ENCODE measurements at regions of chr6 and their contacts with region 1.

Region 1: DNA sequence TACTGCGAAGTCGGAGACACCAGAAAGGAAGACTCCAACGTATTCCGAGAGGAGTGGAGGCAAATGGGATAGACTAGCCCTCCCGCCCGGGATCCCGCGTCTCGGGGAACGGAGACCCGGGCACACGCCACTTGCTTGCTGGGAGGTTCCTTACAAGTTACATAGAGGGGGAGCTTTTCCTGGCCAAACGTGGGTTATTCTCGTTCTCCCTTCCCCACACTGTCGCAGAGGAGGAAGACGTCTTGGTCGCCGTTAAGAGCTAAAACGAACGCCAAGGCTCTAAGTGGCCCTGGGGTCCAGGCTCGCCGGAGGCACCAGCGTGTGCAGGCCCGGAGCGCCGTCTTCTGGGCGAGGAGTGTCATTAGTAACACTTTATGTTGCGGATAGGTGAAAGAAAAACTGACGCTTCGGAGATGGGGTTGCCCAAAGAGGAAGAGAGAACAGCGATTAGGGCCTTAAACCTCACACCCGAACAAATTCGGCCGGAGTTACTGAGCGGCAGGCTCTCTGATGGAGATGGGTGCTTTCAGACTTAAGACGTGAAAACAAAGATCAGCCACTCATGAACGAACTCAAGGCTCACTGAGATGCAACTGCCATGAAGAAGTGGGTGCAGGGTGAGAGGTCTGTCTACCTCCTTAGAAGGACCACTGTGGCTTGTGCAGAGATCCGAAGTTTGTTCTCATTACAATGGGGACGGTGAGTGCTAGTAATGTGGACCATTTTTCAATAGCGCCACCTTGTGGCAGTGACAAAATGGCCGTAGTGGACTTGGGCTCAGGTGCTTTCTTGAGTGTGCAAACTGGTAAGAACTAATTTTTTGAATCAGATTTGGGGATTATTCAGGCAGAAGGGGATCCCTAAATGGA is 11.7 kb upstream of the ZNF311 start:
- DNase-seq: peak; percentile 90
- ATAC-seq: peak; percentile 84
- H3K4me3 ChIP-seq: peak overlapping the region; percentile 37 to 67 (median 57)
- H3K4me3 Mint-ChIP-seq: peak overlapping the region; percentile 85
- H3K27ac ChIP-seq: no peak overlapping the region
- H3K27ac Mint-ChIP-seq: peak overlapping the region; percentile 47
- H3K4me1 ChIP-seq: peaks cover 11 to 16% of the 10 kb centered on the region in 2 donors
- H3K4me1 Mint-ChIP-seq: peaks cover 19% of the 10 kb centered on the region
- H3K27me3 ChIP-seq: peaks cover 0 to 48% (median 32%) of the 10 kb centered on the region in 4 experiments
- H3K27me3 Mint-ChIP-seq: peaks cover 47% of the 10 kb centered on the region
- CTCF ChIP-seq: peak; percentile 91

Region 2: DNA sequence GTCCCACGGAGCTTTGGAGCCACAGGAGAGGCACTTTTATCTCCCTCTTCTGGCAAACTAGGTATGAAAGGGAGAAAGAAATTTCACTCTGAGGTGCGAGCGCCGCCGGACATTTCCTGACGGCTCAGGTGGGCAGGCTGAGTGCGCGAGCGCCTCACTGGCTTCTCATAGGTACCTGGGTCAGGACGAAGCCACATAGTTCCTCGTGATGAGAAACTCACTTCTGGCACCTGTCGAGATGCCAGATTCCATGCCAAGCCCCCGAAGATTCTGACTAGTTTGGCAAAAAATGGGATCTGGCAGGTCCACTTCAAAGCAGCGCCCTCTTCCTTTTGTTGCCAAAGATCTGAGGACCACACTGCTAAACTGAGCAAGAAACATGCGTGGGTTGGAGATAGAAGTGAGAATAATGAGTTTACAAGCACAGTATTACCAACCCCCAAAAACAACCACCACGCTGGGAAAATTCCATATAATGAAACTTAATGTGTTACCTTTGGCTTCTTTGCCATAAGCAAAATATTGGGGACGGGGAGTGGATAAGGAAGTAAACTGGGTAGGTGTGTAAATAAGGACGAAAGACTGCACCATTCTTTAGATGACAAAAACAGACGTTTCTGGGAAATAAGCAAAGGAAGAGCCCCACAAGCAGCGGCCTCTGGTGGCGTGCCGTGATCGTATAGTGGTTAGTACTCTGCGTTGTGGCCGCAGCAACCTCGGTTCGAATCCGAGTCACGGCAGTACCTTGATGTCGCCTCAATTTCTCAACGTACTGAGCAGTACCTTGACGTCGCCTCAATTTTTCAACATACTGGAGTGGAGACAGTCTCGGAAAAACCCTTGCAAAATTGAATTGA is 1859.1 kb before region 1 on chr6:
- CTCF ChIA-PET with region 1: no interaction called
- POLR2A ChIA-PET with region 1: no interaction called
- intact Hi-C with region 1: loop called (anchors 2 kb)
- DNase-seq: peak; percentile 91
- ATAC-seq: peak; percentile 77
- H3K4me3 ChIP-seq: peak overlapping the region; percentile 59 to 91 (median 72)
- H3K4me3 Mint-ChIP-seq: peak overlapping the region; percentile 94
- H3K27ac ChIP-seq: peak overlapping the region; percentile 18 to 45
- H3K27ac Mint-ChIP-seq: peak overlapping the region; percentile 85
- H3K4me1 ChIP-seq: peaks cover 17 to 20% of the 10 kb centered on the region in 2 donors
- H3K4me1 Mint-ChIP-seq: peaks cover 25% of the 10 kb centered on the region
- H3K27me3 ChIP-seq: no peaks in the 10 kb centered on the region
- H3K27me3 Mint-ChIP-seq: no peaks in the 10 kb centered on the region
- CTCF ChIP-seq: peak; percentile 64

Region 3: GRCh38 chr6:28683944-28684538 is 332.8 kb before region 1 on chr6:
- CTCF ChIA-PET with region 1: interaction called, 12 read pairs
- POLR2A ChIA-PET with region 1: no interaction called
- intact Hi-C with region 1: loop called (anchors 1 kb)
- DNase-seq: peak; percentile 53
- ATAC-seq: peak; percentile 54
- H3K4me3 ChIP-seq: no peak overlapping the region
- H3K4me3 Mint-ChIP-seq: no peak overlapping the region
- H3K27ac ChIP-seq: no peak overlapping the region
- H3K27ac Mint-ChIP-seq: no peak overlapping the region
- H3K4me1 ChIP-seq: no peaks in the 10 kb centered on the region
- H3K4me1 Mint-ChIP-seq: no peaks in the 10 kb centered on the region
- H3K27me3 ChIP-seq: peaks cover 0 to 40% (median 31%) of the 10 kb centered on the region in 4 experiments
- H3K27me3 Mint-ChIP-seq: peaks cover 71% of the 10 kb centered on the region
- CTCF ChIP-seq: peak; percentile 76

Region 4: DNA sequence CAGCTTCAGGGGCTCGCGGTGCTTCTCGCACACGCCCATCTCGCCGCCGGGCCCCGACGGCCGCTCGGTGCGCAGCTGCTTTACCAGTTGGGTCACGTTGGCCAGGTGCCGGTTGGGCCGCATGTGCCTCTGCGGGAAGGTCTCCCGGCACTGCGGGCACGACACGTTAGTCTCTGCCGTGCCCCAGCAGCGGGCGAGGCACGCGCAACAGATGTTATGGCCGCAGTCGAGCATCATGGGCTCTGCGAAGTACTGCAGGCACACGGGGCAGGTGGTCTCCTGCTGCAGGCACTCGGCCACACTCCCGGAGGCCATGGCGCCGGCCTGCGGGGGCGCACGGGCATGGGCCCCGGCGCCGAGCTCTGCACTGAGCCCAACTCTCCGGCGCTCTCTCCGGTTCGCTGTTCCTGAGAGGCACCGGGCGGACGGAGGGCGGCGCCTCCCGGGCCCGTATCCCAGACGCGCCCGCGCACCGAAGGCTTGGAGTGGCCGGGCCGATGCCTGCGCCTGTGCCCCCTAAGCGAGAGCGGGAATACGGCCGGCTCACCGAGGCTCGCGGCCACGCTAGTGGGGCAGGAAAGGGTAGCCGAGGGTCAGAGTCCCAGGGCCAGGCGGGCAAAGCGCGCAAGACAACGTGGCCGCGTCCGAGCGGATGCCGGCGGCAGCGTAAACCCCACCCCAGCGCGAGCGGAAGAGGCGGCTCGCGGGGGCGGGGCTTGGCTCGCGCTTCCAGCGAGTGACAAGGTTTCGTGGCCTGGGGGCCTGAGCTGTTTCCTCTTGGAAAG is 93.3 kb before region 1 on chr6 and contains the start of gene TRIM27:
- CTCF ChIA-PET with region 1: no interaction called
- POLR2A ChIA-PET with region 1: no interaction called
- intact Hi-C with region 1: loop called (anchors 5 kb)
- DNase-seq: peak; percentile 90
- ATAC-seq: peak; percentile 86
- H3K4me3 ChIP-seq: peak within 1 kb of the TSS; percentile 71 to 97 (median 92)
- H3K4me3 Mint-ChIP-seq: peak within 1 kb of the TSS; percentile 90
- H3K27ac ChIP-seq: peak within 1 kb of the TSS; percentile 81 to 83
- H3K27ac Mint-ChIP-seq: peak within 1 kb of the TSS; percentile 97
- H3K4me1 ChIP-seq: peaks cover 30% of the 10 kb centered on the region in 2 donors
- H3K4me1 Mint-ChIP-seq: peaks cover 34% of the 10 kb centered on the region
- H3K27me3 ChIP-seq: no peaks in the 10 kb centered on the region
- H3K27me3 Mint-ChIP-seq: no peaks in the 10 kb centered on the region
- CTCF ChIP-seq: peak; percentile 21
- total RNA-seq, gene TRIM27: 66.7 and 70.0 TPM in 2 replicates

Region 5: GRCh38 chr6:29005183-29005885 is 11.5 kb before region 1 on chr6 and contains the start of gene ZNF311:
- CTCF ChIA-PET with region 1: interaction called, 10 read pairs
- POLR2A ChIA-PET with region 1: no interaction called
- intact Hi-C with region 1: no loop called
- DNase-seq: peak; percentile 32
- ATAC-seq: no peak
- H3K4me3 ChIP-seq: peak within 1 kb of the TSS in 4 of 5 experiments; percentile 1 to 56 (median 44)
- H3K4me3 Mint-ChIP-seq: peak within 1 kb of the TSS; percentile 80
- H3K27ac ChIP-seq: no peak within 1 kb of the TSS
- H3K27ac Mint-ChIP-seq: no peak within 1 kb of the TSS
- H3K4me1 ChIP-seq: peaks cover 5 to 10% of the 10 kb centered on the region in 2 donors
- H3K4me1 Mint-ChIP-seq: peaks cover 5% of the 10 kb centered on the region
- H3K27me3 ChIP-seq: peaks cover 0 to 34% (median 23%) of the 10 kb centered on the region in 4 experiments
- H3K27me3 Mint-ChIP-seq: peaks cover 53% of the 10 kb centered on the region
- CTCF ChIP-seq: no peak
- total RNA-seq, gene ZNF311: 0.10 and 0.17 TPM in 2 replicates

Region 6: GRCh38 chr6:29792123-29793035 is 775.6 kb after region 1 on chr6:
- CTCF ChIA-PET with region 1: no interaction called
- POLR2A ChIA-PET with region 1: no interaction called
- intact Hi-C with region 1: no loop called
- DNase-seq: peak; percentile 84
- ATAC-seq: peak; percentile 89
- H3K4me3 ChIP-seq: peak overlapping the region; percentile 30 to 89 (median 85)
- H3K4me3 Mint-ChIP-seq: peak overlapping the region; percentile 91
- H3K27ac ChIP-seq: peak overlapping the region; percentile 56 to 90
- H3K27ac Mint-ChIP-seq: peak overlapping the region; percentile 80
- H3K4me1 ChIP-seq: peaks cover 5 to 16% of the 10 kb centered on the region in 2 donors
- H3K4me1 Mint-ChIP-seq: peaks cover 19% of the 10 kb centered on the region
- H3K27me3 ChIP-seq: peaks cover 0 to 30% (median 19%) of the 10 kb centered on the region in 4 experiments
- H3K27me3 Mint-ChIP-seq: peaks cover 41% of the 10 kb centered on the region
- CTCF ChIP-seq: no peak

Region 7: GRCh38 chr6:29847871-29848630 is 831.3 kb after region 1 on chr6:
- CTCF ChIA-PET with region 1: no interaction called
- POLR2A ChIA-PET with region 1: no interaction called
- intact Hi-C with region 1: no loop called
- DNase-seq: peak; percentile 85
- ATAC-seq: peak; percentile 85
- H3K4me3 ChIP-seq: no peak overlapping the region
- H3K4me3 Mint-ChIP-seq: no peak overlapping the region
- H3K27ac ChIP-seq: no peak overlapping the region
- H3K27ac Mint-ChIP-seq: no peak overlapping the region
- H3K4me1 ChIP-seq: peaks cover 6 to 11% of the 10 kb centered on the region in 2 donors
- H3K4me1 Mint-ChIP-seq: peaks cover 9% of the 10 kb centered on the region
- H3K27me3 ChIP-seq: peaks cover 0 to 63% (median 45%) of the 10 kb centered on the region in 4 experiments
- H3K27me3 Mint-ChIP-seq: peaks cover 66% of the 10 kb centered on the region
- CTCF ChIP-seq: peak; percentile 92

Region 8: GRCh38 chr6:30463651-30464618 is 1447.1 kb after region 1 on chr6:
- CTCF ChIA-PET with region 1: no interaction called
- POLR2A ChIA-PET with region 1: no interaction called
- intact Hi-C with region 1: no loop called
- DNase-seq: peak; percentile 71
- ATAC-seq: peak; percentile 58
- H3K4me3 ChIP-seq: peak overlapping the region in 4 of 5 experiments; percentile 8 to 41 (median 30)
- H3K4me3 Mint-ChIP-seq: peak overlapping the region; percentile 65
- H3K27ac ChIP-seq: no peak overlapping the region
- H3K27ac Mint-ChIP-seq: no peak overlapping the region
- H3K4me1 ChIP-seq: peaks cover 42% of the 10 kb centered on the region in 2 donors
- H3K4me1 Mint-ChIP-seq: peaks cover 43% of the 10 kb centered on the region
- H3K27me3 ChIP-seq: peaks cover 0 to 90% (median 77%) of the 10 kb centered on the region in 4 experiments
- H3K27me3 Mint-ChIP-seq: peaks cover 74% of the 10 kb centered on the region
- CTCF ChIP-seq: no peak